RWPE1 (cell line): ENCODE measurements at regions of chr1 and their contacts with region 1.

Region 1: DNA sequence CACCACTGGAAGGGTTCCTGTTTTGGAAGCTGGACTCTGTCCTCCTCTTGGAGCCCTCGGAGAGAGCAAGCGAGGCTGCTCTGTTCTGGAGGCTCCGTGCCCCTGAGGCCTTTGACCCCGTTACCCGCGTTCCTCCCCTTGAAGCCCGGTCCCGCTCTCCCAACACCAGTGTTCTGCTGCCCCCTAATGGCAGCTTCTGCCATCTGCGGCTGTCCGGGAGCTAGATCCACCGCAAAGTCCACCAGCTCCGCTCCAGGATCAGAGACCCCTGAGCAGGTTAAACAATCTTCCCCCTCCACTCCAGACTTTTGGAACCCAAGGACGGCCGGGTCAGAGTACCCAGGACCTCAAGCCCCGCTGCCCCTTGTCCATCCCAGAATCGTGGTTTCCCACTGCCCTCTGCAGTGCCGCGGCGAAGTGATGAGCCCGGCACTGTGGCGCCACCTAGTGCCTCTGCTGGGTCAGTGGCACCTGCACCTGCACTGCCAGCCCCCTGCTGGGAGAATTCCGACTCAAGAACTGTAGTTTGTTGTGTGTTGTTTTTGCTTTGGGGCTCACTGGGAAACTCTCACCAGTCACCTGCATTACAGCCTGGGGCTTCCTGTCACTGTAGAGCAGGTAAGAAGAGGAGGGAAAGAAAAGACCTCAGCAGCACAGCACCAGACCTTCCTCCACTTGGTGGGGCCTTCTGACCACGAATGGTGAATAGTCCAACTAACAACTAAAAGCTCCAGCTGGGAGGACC is 63.5 kb upstream of the NFASC start:
- DNase-seq: peak; percentile 97
- H3K27ac ChIP-seq: no peak overlapping the region
- CTCF ChIP-seq: peak; percentile 98

Region 2: GRCh38 chr1:204368996-204369726 is 438.0 kb before region 1 on chr1:
- CTCF ChIA-PET with region 1: no interaction called
- POLR2A ChIA-PET with region 1: no interaction called
- DNase-seq: no peak
- H3K27ac ChIP-seq: no peak overlapping the region
- CTCF ChIP-seq: no peak

Region 3: GRCh38 chr1:204431310-204432165 is 375.6 kb before region 1 on chr1:
- CTCF ChIA-PET with region 1: interaction called, 10 read pairs
- POLR2A ChIA-PET with region 1: no interaction called
- DNase-seq: peak; percentile 80
- H3K27ac ChIP-seq: peak overlapping the region; percentile 69
- CTCF ChIP-seq: peak; percentile 90

Region 4: GRCh38 chr1:204572931-204573891 is 233.9 kb before region 1 on chr1:
- CTCF ChIA-PET with region 1: interaction called, 33 read pairs
- POLR2A ChIA-PET with region 1: no interaction called
- DNase-seq: peak; percentile 72
- H3K27ac ChIP-seq: no peak overlapping the region
- CTCF ChIP-seq: no peak

Region 5: GRCh38 chr1:204746838-204747442 is 60.2 kb before region 1 on chr1:
- CTCF ChIA-PET with region 1: interaction called, 16 read pairs
- POLR2A ChIA-PET with region 1: no interaction called
- DNase-seq: peak; percentile 68
- H3K27ac ChIP-seq: no peak overlapping the region
- CTCF ChIP-seq: peak; percentile 87

Region 6: DNA sequence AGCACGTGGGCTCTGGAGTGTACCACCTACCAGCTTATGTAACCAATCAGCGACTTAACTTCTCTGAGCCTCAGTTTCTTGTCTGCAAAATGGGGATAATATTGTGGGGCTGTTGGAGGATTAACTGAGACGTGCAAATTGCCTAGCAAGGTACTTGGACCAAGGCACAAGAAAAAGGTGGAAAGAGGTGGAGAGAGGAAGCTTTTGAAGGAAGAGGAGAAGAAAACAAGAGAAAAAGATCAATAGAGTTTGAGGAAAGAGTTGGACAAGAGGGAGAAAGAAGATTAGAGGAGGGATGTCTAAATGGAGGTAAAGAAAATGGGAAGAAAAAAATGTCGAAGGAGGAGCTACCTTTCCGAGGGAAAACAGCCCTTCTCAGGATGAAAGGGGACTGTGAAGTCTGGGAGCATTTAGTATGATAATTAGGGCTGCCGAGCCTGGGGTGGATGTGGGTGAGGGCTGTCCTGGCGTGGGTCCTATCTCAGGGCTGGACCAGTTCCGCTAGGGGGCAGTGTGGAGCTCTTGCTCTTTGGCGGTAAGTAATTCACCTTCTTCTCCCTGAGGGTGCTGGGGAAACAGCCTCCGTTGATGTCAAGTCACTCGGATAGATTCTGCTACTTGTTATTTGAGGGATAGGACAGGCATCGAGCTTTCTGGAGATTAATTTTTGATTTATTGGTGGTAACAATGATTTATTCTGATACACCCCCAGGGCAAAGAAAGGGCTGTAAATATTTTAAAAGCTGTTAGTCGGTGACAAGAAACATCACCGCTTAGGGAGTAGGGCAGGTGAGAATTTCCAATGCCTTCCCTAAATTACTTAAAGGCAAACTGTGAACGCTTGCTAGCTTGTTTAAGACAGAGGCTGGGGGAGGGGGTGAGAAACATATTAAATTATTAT is 15.4 kb before region 1 on chr1:
- CTCF ChIA-PET with region 1: interaction called, 56 read pairs
- POLR2A ChIA-PET with region 1: no interaction called
- DNase-seq: peak; percentile 77
- H3K27ac ChIP-seq: no peak overlapping the region
- CTCF ChIP-seq: peak; percentile 54

Region 7: GRCh38 chr1:204975570-204976235 is 168.6 kb after region 1 on chr1:
- CTCF ChIA-PET with region 1: interaction called, 12 read pairs
- POLR2A ChIA-PET with region 1: no interaction called
- DNase-seq: peak; percentile 89
- H3K27ac ChIP-seq: no peak overlapping the region
- CTCF ChIP-seq: peak; percentile 80